PC-3 (cell line): ENCODE measurements at regions of chr21 and their contacts with region 1.

Region 1: DNA sequence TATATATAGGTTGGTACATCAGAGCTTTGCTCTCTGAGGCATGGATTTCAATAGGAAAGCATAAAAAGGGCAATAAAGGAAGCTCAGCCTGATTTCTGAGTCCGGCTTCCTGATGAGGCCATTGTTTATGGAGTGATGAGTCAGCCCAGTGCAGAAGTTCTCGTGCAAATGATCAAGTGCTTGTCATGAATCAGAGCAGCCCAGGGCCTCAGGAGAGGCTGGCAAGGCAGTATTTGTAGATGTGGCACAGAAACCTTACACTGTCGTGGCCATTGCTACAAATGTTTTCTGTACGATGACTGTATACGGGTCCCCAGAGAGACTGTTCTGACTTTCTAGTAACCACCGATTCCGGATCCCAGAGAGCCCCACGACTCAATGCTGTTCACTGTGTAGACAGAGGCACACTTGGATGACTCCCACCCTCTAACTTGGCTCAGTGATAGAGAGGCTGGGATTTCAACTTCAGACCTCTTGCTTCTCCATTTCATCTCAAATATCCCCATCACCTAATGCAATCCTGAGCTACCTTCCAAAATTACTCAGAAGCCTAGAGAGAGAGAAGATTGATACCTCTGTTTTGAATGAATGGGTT is 26.8 kb downstream of the UMODL1 start:
- DNase-seq: peak; percentile 96
- ATAC-seq: peak; percentile 87
- H3K4me3 ChIP-seq: peak overlapping the region; percentile 31; the same call in 1 of the 2 replicates
- H3K27ac ChIP-seq: peak overlapping the region; percentile 94
- H3K4me1 ChIP-seq: peaks cover 39% of the 10 kb centered on the region
- H3K27me3 ChIP-seq: no peaks in the 10 kb centered on the region
- CTCF ChIP-seq: no peak

Region 2: GRCh38 chr21:41507496-41508299 is 590.3 kb before region 1 on chr21 and contains the start of gene TMPRSS2:
- CTCF ChIA-PET with region 1: no interaction called
- POLR2A ChIA-PET with region 1: no interaction called
- intact Hi-C with region 1: no loop called
- DNase-seq: peak; percentile 68
- ATAC-seq: peak; percentile 80
- H3K4me3 ChIP-seq: peak within 1 kb of the TSS; percentile 83
- H3K27ac ChIP-seq: peak within 1 kb of the TSS; percentile 12; the same call in 1 of the 2 replicates
- H3K4me1 ChIP-seq: peaks cover 24% of the 10 kb centered on the region
- H3K27me3 ChIP-seq: no peaks in the 10 kb centered on the region
- CTCF ChIP-seq: no peak
- total RNA-seq, gene TMPRSS2: 9.3 and 15.8 TPM in 2 replicates

Region 3: DNA sequence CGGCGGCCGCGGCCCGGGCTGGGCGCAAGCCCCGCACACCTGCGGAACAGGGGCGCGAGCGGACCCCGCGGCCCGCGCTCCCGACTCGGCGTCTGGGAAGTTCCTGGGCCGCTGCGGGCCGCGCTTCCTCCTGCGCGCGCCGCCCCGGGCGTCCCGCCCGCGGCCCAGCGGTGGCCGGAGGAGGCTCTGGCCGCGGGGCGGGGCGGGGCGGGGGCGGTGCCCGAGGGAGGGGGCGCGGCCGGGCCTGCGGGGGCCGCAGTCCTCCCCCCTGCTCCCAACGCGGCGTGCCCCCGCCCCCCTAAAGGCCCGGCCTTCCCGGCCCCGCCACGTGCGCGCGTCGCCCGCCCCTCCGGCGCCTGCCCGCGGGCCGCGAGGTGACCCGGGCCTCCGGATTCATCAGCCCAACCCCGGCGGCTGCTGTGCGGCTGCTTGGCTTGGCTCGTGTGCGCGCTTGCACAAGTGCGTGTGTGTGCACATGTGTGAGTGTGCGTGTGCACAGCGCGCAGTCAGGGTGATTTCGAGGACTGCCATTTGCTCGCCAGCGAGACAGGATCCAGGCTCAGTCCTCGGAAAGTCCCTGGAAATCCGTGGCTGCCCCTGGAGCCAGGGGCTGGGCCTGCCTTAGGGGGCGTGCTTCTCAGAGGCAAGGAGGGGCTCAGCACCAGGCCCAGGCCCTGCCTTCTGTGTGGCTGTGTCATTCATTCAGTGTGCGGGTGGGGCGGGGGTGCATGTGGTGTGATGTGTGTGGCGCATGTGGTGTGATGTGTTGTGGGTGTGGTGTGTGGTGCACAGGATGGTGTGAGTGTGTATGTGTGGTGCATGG is 143.9 kb before region 1 on chr21 and contains the start of gene C2CD2:
- CTCF ChIA-PET with region 1: no interaction called
- POLR2A ChIA-PET with region 1: no interaction called
- intact Hi-C with region 1: loop called (anchors 5 kb)
- DNase-seq: peak; percentile 79
- ATAC-seq: peak; percentile 44
- H3K4me3 ChIP-seq: peak within 1 kb of the TSS; percentile 76
- H3K27ac ChIP-seq: peak within 1 kb of the TSS; percentile 98
- H3K4me1 ChIP-seq: peaks cover 63% of the 10 kb centered on the region
- H3K27me3 ChIP-seq: no peaks in the 10 kb centered on the region
- CTCF ChIP-seq: 0 out of 2 replicates have a peak, but pooled peaks have one; percentile 8
- total RNA-seq, gene C2CD2: 50.4 and 81.4 TPM in 2 replicates

Region 4: GRCh38 chr21:42009831-42010523 is 88.0 kb before region 1 on chr21 and contains the start of gene ZBTB21:
- CTCF ChIA-PET with region 1: interaction called, 4 read pairs
- POLR2A ChIA-PET with region 1: no interaction called
- intact Hi-C with region 1: loop called (anchors 1 kb)
- DNase-seq: peak; percentile 99
- ATAC-seq: peak; percentile 84
- H3K4me3 ChIP-seq: peak within 1 kb of the TSS; percentile 80
- H3K27ac ChIP-seq: peak within 1 kb of the TSS; percentile 80
- H3K4me1 ChIP-seq: peaks cover 25% of the 10 kb centered on the region
- H3K27me3 ChIP-seq: no peaks in the 10 kb centered on the region
- CTCF ChIP-seq: no peak
- total RNA-seq, gene ZBTB21: 8.1 and 9.2 TPM in 2 replicates

Region 5: DNA sequence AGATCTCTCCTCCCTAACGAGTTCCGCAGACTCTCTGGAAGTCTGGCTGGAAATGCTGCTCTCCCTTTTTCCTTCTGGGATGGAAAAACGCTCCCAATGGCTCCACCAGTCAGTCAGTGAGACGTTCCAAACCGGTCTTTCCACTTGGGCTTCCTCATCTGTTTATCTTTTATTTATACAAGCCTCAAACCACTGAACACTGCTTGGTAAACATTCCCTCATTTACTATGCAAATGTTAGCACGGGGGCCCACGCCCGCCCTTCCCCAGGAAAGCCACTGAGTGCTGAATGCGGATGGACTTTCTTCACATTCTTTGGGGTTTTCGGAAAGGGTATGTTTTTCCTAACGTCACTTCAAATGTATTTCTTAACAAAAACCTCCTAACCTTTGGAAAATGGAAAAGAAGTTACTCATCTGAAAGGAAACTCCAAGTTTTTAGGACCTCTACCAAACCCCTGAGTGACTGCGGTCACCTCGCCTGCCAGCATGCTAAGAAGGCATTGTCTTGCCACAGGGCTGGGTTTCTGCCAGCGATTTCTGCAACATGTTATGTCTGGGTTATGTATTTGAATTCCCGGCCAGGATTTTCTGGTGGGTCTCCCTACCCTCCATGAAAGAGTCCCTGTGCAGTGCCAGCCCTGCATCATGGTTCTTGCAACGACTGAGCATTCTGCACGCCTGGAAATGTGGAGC is 40.8 kb before region 1 on chr21:
- CTCF ChIA-PET with region 1: no interaction called
- POLR2A ChIA-PET with region 1: no interaction called
- intact Hi-C with region 1: loop called (anchors 2 kb)
- DNase-seq: peak; percentile 95
- ATAC-seq: peak; percentile 86
- H3K4me3 ChIP-seq: peak overlapping the region; percentile 50
- H3K27ac ChIP-seq: peak overlapping the region; percentile 86
- H3K4me1 ChIP-seq: peaks cover 24% of the 10 kb centered on the region
- H3K27me3 ChIP-seq: no peaks in the 10 kb centered on the region
- CTCF ChIP-seq: no peak

Region 6: GRCh38 chr21:42209819-42210479 is 112.0 kb after region 1 on chr21:
- CTCF ChIA-PET with region 1: no interaction called
- POLR2A ChIA-PET with region 1: no interaction called
- intact Hi-C with region 1: no loop called
- DNase-seq: peak; percentile 63
- ATAC-seq: peak; percentile 93
- H3K4me3 ChIP-seq: no peak overlapping the region
- H3K27ac ChIP-seq: no peak overlapping the region
- H3K4me1 ChIP-seq: peaks cover 9% of the 10 kb centered on the region
- H3K27me3 ChIP-seq: no peaks in the 10 kb centered on the region
- CTCF ChIP-seq: no peak

Region 7: DNA sequence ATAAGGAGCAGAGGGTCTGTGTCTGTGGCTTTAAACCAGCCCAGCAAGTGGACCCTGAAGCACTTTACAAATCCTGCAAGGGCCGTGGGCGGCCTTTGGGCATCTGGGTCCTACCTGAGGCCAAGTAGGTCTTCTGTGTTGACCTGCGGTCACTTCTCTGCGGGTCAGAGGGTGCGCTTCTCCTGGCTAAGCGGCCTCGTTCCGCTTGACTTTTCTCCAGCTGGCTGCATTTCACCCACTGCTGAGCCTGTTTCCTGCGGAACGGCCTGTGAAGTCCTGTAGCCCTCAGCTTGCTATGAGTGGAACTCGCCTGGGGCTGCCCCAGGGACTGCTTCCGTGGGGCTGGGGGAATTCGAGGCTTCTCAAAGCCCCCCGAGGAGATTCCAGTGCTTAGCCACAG is 459.0 kb after region 1 on chr21:
- CTCF ChIA-PET with region 1: no interaction called
- POLR2A ChIA-PET with region 1: no interaction called
- intact Hi-C with region 1: no loop called
- DNase-seq: no peak
- ATAC-seq: no peak
- H3K4me3 ChIP-seq: no peak overlapping the region
- H3K27ac ChIP-seq: no peak overlapping the region
- H3K4me1 ChIP-seq: no peaks in the 10 kb centered on the region
- H3K27me3 ChIP-seq: no peaks in the 10 kb centered on the region
- CTCF ChIP-seq: no peak